ENCODE measurements at regions of chr9 and their contacts with region 1.

Region 1: DNA sequence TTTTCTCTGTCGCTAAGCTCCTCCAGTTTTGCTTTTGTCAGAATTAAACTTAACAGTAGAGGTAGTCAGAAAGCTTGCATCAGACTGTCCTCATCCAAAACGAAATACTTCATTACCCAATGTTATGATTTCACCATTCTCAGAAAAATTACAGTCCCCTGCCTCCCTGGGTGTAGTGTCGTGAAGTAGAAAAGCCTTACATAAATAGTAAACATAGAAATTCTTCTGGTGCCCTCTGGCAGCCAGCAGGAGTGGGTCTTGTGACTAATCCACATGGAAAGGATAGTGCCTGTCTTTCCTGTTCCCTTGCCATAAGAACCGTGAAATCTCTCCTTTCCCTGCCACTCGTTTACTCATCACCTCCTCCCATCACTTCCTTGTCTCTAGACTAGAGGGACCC is 230.6 kb downstream of the GNA14 start:
- DNase-seq: peak; percentile 79
- ATAC-seq: peak; percentile 90
- H3K4me3 ChIP-seq: no peak overlapping the region
- H3K27ac ChIP-seq: peak overlapping the region; percentile 61; the same call in 1 of the 2 replicates
- H3K4me1 ChIP-seq: peaks cover 2% of the 10 kb centered on the region; the same call in 1 of the 2 replicates
- H3K27me3 ChIP-seq: no peaks in the 10 kb centered on the region
- CTCF ChIP-seq: no peak
- POLR2A ChIP-seq: no peak
- RAD21 ChIP-seq: no peak

Region 2: GRCh38 chr9:77177161-77177893 is 240.2 kb before region 1 on chr9 and contains the start of gene VPS13A:
- CTCF ChIA-PET with region 1: interaction called, 3 read pairs
- POLR2A ChIA-PET with region 1: no interaction called
- dilution Hi-C with region 1: no loop called
- in situ Hi-C with region 1: no loop called
- intact Hi-C with region 1: loop called (anchors 5 kb)
- DNase-seq: peak; percentile 91
- ATAC-seq: peak; percentile 92
- H3K4me3 ChIP-seq: peak within 1 kb of the TSS; percentile 80
- H3K27ac ChIP-seq: peak within 1 kb of the TSS; percentile 43
- H3K4me1 ChIP-seq: 0 out of 2 replicates have a peak, but pooled peaks cover 1% of the 10 kb centered on the region
- H3K27me3 ChIP-seq: no peaks in the 10 kb centered on the region
- CTCF ChIP-seq: peak; percentile 34
- POLR2A ChIP-seq: no peak
- RAD21 ChIP-seq: no peak
- total RNA-seq, gene VPS13A: 26.5 and 46.9 TPM in 2 replicates

Region 3: GRCh38 chr9:77488439-77489126 is 71.0 kb after region 1 on chr9:
- CTCF ChIA-PET with region 1: no interaction called
- POLR2A ChIA-PET with region 1: no interaction called
- dilution Hi-C with region 1: no loop called
- in situ Hi-C with region 1: no loop called
- intact Hi-C with region 1: no loop called
- DNase-seq: peak; percentile 20
- ATAC-seq: peak; percentile 68
- H3K4me3 ChIP-seq: no peak overlapping the region
- H3K27ac ChIP-seq: no peak overlapping the region
- H3K4me1 ChIP-seq: no peaks in the 10 kb centered on the region
- H3K27me3 ChIP-seq: no peaks in the 10 kb centered on the region
- CTCF ChIP-seq: peak; percentile 61
- POLR2A ChIP-seq: no peak
- RAD21 ChIP-seq: peak; percentile 64

Region 4: DNA sequence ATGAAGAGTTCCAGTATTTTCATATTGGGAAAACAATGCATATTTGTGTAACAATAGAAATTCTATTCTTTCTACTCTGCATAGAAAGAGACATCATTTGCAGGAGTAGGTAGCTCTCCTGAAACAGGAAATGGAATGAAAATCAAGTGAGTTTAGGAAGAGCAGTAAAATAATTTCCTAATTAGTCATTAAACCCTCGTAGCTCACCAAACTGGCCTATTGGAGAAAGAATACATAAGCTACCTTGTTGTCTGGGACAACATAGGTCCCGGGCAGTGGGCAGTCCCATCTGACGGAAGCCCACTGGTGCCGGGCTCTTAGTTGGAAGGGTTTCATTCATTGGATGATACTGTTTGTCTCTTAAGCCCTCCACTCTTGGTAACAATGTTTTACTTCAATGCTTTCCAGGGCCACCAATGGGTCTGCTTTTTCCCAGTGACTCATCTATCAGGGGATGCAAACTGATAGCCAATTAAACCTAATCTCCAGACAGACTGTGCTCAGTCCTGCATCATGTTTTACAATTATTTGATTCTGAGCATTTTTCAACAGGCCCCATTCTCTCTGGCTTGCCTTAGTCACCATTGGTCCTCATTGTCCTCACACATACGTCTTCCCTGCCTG is 184.0 kb after region 1 on chr9:
- CTCF ChIA-PET with region 1: no interaction called
- POLR2A ChIA-PET with region 1: no interaction called
- dilution Hi-C with region 1: no loop called
- in situ Hi-C with region 1: no loop called
- intact Hi-C with region 1: no loop called
- DNase-seq: no peak
- ATAC-seq: no peak
- H3K4me3 ChIP-seq: no peak overlapping the region
- H3K27ac ChIP-seq: no peak overlapping the region
- H3K4me1 ChIP-seq: no peaks in the 10 kb centered on the region
- H3K27me3 ChIP-seq: no peaks in the 10 kb centered on the region; the same call in 1 of the 2 replicates
- CTCF ChIP-seq: no peak
- POLR2A ChIP-seq: no peak
- RAD21 ChIP-seq: no peak

Region 5: DNA sequence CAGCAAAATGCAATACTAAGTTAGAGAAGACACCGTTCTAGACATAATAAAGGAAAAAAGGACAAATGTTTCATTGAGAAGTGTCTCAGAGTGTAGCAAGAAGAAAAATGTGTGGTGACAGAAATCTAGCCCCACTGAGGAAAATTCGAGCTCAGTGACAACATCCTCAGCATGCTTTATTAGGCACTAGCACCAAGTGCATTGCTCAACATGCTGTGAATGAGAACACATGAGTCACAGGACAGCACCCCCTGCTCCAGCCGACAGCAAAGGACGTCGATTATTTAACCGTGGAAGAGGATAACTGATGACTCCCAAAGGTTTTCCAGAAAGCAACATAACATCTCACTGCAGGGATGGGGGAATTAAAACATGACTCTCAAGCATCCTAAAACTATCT is 431.3 kb after region 1 on chr9:
- CTCF ChIA-PET with region 1: no interaction called
- POLR2A ChIA-PET with region 1: no interaction called
- dilution Hi-C with region 1: no loop called
- in situ Hi-C with region 1: no loop called
- intact Hi-C with region 1: no loop called
- DNase-seq: peak; percentile 91
- ATAC-seq: peak; percentile 85
- H3K4me3 ChIP-seq: no peak overlapping the region
- H3K27ac ChIP-seq: no peak overlapping the region
- H3K4me1 ChIP-seq: peaks cover 26% of the 10 kb centered on the region
- H3K27me3 ChIP-seq: no peaks in the 10 kb centered on the region
- CTCF ChIP-seq: no peak
- POLR2A ChIP-seq: no peak
- RAD21 ChIP-seq: 0 out of 2 replicates have a peak, but pooled peaks have one; percentile 11